ENCODE measurements at regions of chr9 and their contacts with region 1.

Region 1: DNA sequence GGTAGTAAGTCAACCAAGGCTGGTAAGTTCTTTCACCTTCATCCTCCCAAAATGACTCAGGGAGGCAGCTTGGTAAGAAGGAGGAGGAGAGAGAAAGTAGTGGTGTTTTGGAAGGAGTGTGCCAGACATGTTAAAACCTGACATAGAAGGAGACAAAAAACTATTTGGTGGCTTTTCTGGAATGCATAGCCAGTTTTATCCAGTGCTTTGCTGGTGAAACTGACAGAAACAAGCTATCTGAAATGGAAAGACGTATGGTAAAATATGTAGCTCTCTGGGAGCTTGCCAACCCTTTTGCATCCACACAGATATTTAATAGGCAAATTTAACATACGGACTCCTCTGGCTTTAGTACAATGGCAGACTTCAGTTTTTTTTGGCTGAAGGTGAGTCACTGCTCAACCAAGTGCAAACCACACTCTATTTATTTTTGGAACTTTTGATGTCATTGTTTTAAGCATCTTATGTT is 45.4 kb downstream of the RAB14 start:
- DNase-seq: peak in 1 of 2 experiments; percentile 28
- H3K4me3 ChIP-seq: no peak overlapping the region
- H3K27ac ChIP-seq: no peak overlapping the region
- H3K4me1 ChIP-seq: peaks cover 30% of the 10 kb centered on the region
- H3K27me3 ChIP-seq: no peaks in the 10 kb centered on the region
- CTCF ChIP-seq: no peak

Region 2: DNA sequence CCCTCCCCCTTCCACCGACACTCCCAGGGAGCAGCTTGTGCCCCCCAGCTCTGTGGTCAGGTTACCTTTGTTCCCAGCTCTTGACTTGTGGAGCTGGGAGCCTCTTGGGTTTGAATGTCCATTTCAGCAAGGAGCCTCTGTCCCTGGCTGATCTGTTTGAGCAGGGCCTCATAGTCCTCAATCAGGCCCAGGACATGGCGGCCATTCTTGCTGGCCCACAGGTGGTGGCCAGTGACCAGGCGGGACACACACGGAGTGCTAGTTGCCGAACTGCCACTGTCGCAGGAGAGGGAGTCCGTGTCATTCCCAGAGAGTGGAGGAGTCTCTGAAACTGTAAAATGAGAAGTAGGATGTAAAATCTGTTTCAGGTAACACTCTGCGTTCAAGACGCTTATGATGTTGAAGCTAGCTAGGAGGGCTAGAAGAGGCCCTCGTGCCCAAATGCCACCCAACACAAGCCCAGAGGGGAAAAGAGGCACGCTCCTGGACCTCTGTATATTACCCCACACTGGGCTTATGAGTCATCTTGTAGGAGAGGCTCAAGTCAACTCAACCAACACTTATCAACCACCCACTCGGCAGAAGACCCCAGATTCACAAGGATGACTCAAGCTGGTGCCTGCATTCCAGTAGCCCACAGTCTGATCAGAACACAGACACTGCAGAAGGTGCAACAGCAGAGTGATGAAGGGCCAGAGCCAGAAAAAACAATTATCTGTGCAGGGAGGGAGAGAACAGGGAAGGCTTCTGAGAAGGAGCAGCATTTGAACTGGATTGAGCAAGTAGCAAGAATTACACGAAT is 753.4 kb before region 1 on chr9:
- CTCF ChIA-PET with region 1: no interaction called
- POLR2A ChIA-PET with region 1: no interaction called
- intact Hi-C with region 1: no loop called
- DNase-seq: peak; percentile 55 to 82
- H3K4me3 ChIP-seq: no peak overlapping the region
- H3K27ac ChIP-seq: peak overlapping the region; percentile 96
- H3K4me1 ChIP-seq: peaks cover 30% of the 10 kb centered on the region
- H3K27me3 ChIP-seq: no peaks in the 10 kb centered on the region
- CTCF ChIP-seq: no peak

Region 3: GRCh38 chr9:120730661-120731514 is 425.4 kb before region 1 on chr9:
- CTCF ChIA-PET with region 1: interaction called, 10 read pairs
- POLR2A ChIA-PET with region 1: no interaction called
- intact Hi-C with region 1: no loop called
- DNase-seq: peak; percentile 92 to 100
- H3K4me3 ChIP-seq: no peak overlapping the region; the same call in 1 of the 2 replicates
- H3K27ac ChIP-seq: peak overlapping the region; percentile 87
- H3K4me1 ChIP-seq: peaks cover 73% of the 10 kb centered on the region
- H3K27me3 ChIP-seq: no peaks in the 10 kb centered on the region
- CTCF ChIP-seq: no peak

Region 4: GRCh38 chr9:121067640-121068039 is 88.7 kb before region 1 on chr9:
- CTCF ChIA-PET with region 1: interaction called, 15 read pairs
- POLR2A ChIA-PET with region 1: no interaction called
- intact Hi-C with region 1: no loop called
- DNase-seq: no peak
- H3K4me3 ChIP-seq: no peak overlapping the region
- H3K27ac ChIP-seq: no peak overlapping the region
- H3K4me1 ChIP-seq: peaks cover 4% of the 10 kb centered on the region; the same call in 1 of the 2 replicates
- H3K27me3 ChIP-seq: no peaks in the 10 kb centered on the region
- CTCF ChIP-seq: no peak

Region 5: DNA sequence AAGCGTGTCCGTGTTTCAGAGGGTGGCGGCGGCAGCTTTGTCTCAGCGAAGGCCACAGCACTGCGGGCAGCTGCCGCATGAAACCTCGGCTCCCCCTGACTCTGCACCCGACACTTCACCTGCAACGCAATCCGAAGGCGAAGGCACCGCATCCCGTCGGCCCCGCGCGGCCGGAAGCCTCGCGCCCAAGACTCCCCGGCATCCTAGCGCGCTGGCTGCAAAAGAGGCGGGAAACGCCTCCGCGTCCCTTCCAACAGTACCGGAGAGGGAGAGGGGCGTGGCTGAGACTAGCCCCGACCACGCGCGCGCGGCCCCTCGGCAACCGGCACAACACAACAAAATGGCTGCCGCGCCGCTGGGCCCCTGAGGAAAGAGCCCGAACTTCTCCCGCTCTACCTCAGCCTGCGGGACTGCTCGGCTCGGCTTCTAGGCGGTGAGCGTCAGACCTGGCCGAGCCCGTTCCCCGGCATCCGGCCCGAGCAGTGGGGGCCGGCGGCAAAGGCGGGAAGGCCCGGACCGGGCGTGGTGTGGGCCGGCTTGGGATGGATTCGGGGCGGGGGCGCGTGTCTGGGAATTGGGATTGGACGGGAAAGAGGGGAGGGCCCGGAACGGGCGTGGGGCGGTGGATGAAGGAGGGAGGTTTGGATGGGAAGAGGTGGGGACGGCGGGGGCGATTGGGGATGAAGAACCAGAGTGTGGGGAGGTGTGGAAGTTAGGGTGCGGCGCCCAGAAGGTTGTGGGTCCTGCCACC is 81.5 kb before region 1 on chr9 and contains the start of gene CNTRL:
- CTCF ChIA-PET with region 1: no interaction called
- POLR2A ChIA-PET with region 1: no interaction called
- intact Hi-C with region 1: loop called (anchors 1 kb)
- DNase-seq: peak; percentile 64 to 90
- H3K4me3 ChIP-seq: peak within 1 kb of the TSS; percentile 69
- H3K27ac ChIP-seq: peak within 1 kb of the TSS; percentile 26; the same call in 1 of the 2 replicates
- H3K4me1 ChIP-seq: peaks cover 15% of the 10 kb centered on the region; the same call in 1 of the 2 replicates
- H3K27me3 ChIP-seq: no peaks in the 10 kb centered on the region
- CTCF ChIP-seq: no peak
- total RNA-seq, gene CNTRL: 41.6 and 44.9 TPM in 2 replicates

Region 6: DNA sequence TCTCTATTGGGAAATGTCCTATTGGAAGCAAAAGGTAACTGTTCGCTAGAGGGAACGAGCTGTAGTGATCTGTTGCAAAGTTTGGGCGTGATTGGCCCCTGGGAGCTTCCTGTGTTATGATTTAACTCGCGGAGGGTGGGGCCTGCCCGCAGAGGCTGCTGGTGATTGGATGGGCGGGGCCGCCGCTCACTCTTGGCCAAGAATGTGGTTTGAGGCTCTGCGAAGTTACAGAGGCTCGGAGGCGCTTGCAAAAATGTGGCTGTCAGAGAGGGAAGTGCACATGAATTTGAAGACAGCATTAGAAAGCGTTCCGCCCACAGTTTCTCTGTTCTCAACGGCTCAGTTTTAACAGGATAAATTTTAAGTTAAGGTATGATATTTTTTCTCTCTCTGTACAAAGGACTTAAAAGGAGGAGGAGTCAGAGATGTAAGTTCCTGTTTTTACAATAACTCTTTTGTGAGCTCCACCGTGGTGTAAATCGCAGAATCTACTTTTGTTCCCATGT is 34.7 kb before region 1 on chr9:
- CTCF ChIA-PET with region 1: interaction called, 4 read pairs
- POLR2A ChIA-PET with region 1: interaction called, 8 read pairs
- intact Hi-C with region 1: loop called (anchors 5 kb)
- DNase-seq: peak; percentile 93 to 96
- H3K4me3 ChIP-seq: peak overlapping the region; percentile 59
- H3K27ac ChIP-seq: peak overlapping the region; percentile 31
- H3K4me1 ChIP-seq: peaks cover 19% of the 10 kb centered on the region; the same call in 1 of the 2 replicates
- H3K27me3 ChIP-seq: no peaks in the 10 kb centered on the region
- CTCF ChIP-seq: no peak; the same call in 1 of the 2 replicates

Region 7: GRCh38 chr9:121201738-121202533 is 45.6 kb after region 1 on chr9 and contains the start of gene RAB14:
- CTCF ChIA-PET with region 1: no interaction called
- POLR2A ChIA-PET with region 1: no interaction called
- intact Hi-C with region 1: loop called (anchors 5 kb)
- DNase-seq: peak; percentile 90 to 100
- H3K4me3 ChIP-seq: peak within 1 kb of the TSS; percentile 92
- H3K27ac ChIP-seq: peak within 1 kb of the TSS; percentile 67
- H3K4me1 ChIP-seq: peaks cover 28% of the 10 kb centered on the region
- H3K27me3 ChIP-seq: no peaks in the 10 kb centered on the region
- CTCF ChIP-seq: peak; percentile 59
- total RNA-seq, gene RAB14: 58.1 and 82.6 TPM in 2 replicates

Region 8: GRCh38 chr9:121393318-121393717 is 237.0 kb after region 1 on chr9:
- CTCF ChIA-PET with region 1: no interaction called
- POLR2A ChIA-PET with region 1: no interaction called
- intact Hi-C with region 1: loop called (anchors 5 kb)
- DNase-seq: no peak
- H3K4me3 ChIP-seq: no peak overlapping the region
- H3K27ac ChIP-seq: no peak overlapping the region
- H3K4me1 ChIP-seq: no peaks in the 10 kb centered on the region
- H3K27me3 ChIP-seq: no peaks in the 10 kb centered on the region
- CTCF ChIP-seq: no peak